ENCODE measurements at regions of chr13 and their contacts with region 1.

Region 1: DNA sequence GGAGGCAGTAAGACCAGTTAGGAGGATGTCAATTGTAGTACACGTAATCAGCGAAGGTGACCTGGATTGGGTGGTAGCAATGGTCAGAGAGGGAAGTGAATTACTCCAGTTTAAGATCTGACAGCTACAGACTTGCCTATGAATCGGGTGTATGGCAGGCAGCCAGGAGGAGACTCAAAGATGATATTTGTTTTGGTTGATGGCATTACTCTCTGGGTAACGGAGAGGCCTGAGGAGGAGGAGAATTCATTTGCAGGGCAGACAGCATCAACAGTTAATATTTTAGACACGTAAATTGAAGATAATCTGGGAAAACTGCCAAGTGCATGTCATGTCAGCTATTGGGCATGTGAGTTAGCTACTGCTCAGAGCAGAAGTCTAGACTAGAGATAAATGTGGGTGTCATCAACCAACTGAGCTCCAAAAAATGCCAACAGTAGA is 109.2 kb downstream of the SGCG start:
- DNase-seq: peak in 3 of 5 donors; percentile 29 to 58 (median 32)
- ATAC-seq: peak; percentile 51 to 94 (median 86)
- H3K4me3 ChIP-seq: no peak overlapping the region
- H3K27ac ChIP-seq: peak overlapping the region in 10 of 12 donors; percentile 12 to 70 (median 46)
- H3K4me1 ChIP-seq: peaks cover 0 to 20% (median 9%) of the 10 kb centered on the region in 12 donors
- H3K27me3 ChIP-seq: no peaks in the 10 kb centered on the region
- CTCF ChIP-seq: no peak
- POLR2A ChIP-seq: no peak

Region 2: DNA sequence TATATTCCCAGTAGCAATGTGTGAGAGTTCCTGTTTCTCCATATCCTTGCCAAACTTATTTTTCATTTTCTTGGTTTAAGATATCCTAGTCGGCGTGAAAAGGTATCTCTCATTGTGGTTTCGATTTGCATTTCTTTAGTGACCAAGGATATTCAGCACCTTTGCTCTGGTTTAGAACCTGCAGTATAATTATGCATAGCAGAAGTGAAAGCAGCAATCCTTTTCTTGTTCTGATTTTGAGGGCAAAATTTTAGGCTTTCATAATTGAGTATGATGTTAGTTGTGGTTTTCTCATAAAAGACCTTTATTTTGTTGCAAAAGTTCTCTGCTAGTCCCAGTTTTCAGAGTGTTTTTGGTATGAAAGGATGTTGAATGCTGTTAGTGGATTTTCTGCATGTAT is 1128.1 kb before region 1 on chr13:
- intact Hi-C with region 1: no loop called
- DNase-seq: no peak
- ATAC-seq: no peak
- H3K4me3 ChIP-seq: no peak overlapping the region
- H3K27ac ChIP-seq: peak overlapping the region in 1 of 12 donors; percentile 19
- H3K4me1 ChIP-seq: peaks cover 0 to 21% (median 0%) of the 10 kb centered on the region in 12 donors
- H3K27me3 ChIP-seq: no peaks in the 10 kb centered on the region
- CTCF ChIP-seq: no peak
- POLR2A ChIP-seq: no peak

Region 3: DNA sequence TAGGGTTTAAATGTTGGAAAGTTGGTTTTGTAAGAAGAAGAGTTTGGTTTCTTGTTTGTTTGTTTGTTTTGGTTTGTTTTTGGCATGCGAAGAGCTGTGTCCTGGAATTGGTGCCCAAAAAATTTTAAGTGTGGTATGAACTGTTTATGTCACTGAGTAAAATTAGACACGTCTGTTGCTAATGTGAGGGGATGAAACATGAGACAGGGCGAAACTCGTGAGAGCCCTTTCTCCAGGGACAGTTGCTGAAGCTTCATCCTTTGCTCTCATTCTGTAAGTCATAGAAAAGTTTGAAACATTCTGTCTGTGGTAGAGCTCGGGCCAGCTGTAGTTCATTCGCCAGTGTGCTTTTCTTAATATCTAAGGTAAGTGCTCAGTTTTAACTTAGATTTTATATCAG is 109.2 kb before region 1 on chr13 and contains the start of gene SGCG:
- intact Hi-C with region 1: loop called in 1 of 10 experiments (anchors 5 kb)
- DNase-seq: peak in 3 of 5 donors; percentile 38 to 41 (median 39)
- ATAC-seq: peak; percentile 51 to 87 (median 72)
- H3K4me3 ChIP-seq: peak within 1 kb of the TSS; percentile 7 to 63 (median 46)
- H3K27ac ChIP-seq: peak within 1 kb of the TSS; percentile 29 to 86 (median 68)
- H3K4me1 ChIP-seq: peaks cover 0 to 19% (median under 1%) of the 10 kb centered on the region in 12 donors
- H3K27me3 ChIP-seq: no peaks in the 10 kb centered on the region
- CTCF ChIP-seq: no peak
- POLR2A ChIP-seq: peak in 1 of 2 donors; percentile 41
- total RNA-seq, gene SGCG: 61.4 to 181 (median 131) TPM